A673 (cell line): ENCODE measurements at regions of chr15 and their contacts with region 1.

Region 1: GRCh38 chr15:77738441-77739302 is 106.0 kb upstream of the LINGO1 start:
- DNase-seq: peak; percentile 96
- H3K4me3 ChIP-seq: peak overlapping the region; percentile 3
- H3K27ac ChIP-seq: peak overlapping the region; percentile 99
- H3K4me1 ChIP-seq: peaks cover 90% of the 10 kb centered on the region
- H3K27me3 ChIP-seq: no peaks in the 10 kb centered on the region
- CTCF ChIP-seq: no peak

Region 2: DNA sequence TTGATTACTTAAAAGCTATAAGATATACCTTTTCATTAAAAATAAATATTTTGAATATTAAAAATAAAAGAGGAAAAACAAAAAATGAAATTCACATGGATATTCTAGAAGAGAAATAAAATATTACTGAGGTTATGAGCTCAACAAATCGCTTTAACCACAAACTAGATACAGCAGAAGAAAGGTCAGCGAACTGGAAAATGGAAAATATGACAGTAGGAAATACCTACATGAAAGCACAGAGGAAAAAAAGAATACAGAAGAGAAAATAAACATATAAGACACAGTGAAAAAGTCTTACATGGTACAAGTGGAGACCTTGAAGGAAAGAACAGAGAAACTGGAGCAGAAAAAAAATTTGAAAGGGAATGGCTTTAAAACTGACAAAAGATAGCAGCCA is 866.7 kb before region 1 on chr15:
- CTCF ChIA-PET with region 1: no interaction called
- POLR2A ChIA-PET with region 1: no interaction called
- intact Hi-C with region 1: loop called (anchors 5 kb)
- DNase-seq: no peak
- H3K4me3 ChIP-seq: no peak overlapping the region
- H3K27ac ChIP-seq: peak overlapping the region; percentile 69
- H3K4me1 ChIP-seq: peaks cover 4% of the 10 kb centered on the region
- H3K27me3 ChIP-seq: no peaks in the 10 kb centered on the region
- CTCF ChIP-seq: no peak

Region 3: GRCh38 chr15:77224352-77224751 is 514.3 kb before region 1 on chr15:
- CTCF ChIA-PET with region 1: no interaction called
- POLR2A ChIA-PET with region 1: no interaction called
- intact Hi-C with region 1: loop called (anchors 5 kb)
- DNase-seq: peak; percentile 96
- H3K4me3 ChIP-seq: peak overlapping the region; percentile 8
- H3K27ac ChIP-seq: peak overlapping the region; percentile 54
- H3K4me1 ChIP-seq: peaks cover 54% of the 10 kb centered on the region
- H3K27me3 ChIP-seq: no peaks in the 10 kb centered on the region
- CTCF ChIP-seq: no peak

Region 4: GRCh38 chr15:77633134-77633912 is 105.3 kb before region 1 on chr15:
- CTCF ChIA-PET with region 1: interaction called, 4 read pairs
- POLR2A ChIA-PET with region 1: no interaction called
- intact Hi-C with region 1: loop called (anchors 1 kb)
- DNase-seq: peak; percentile 87
- H3K4me3 ChIP-seq: peak overlapping the region; percentile 68
- H3K27ac ChIP-seq: peak overlapping the region; percentile 82
- H3K4me1 ChIP-seq: peaks cover 34% of the 10 kb centered on the region
- H3K27me3 ChIP-seq: no peaks in the 10 kb centered on the region
- CTCF ChIP-seq: peak; percentile 100

Region 5: DNA sequence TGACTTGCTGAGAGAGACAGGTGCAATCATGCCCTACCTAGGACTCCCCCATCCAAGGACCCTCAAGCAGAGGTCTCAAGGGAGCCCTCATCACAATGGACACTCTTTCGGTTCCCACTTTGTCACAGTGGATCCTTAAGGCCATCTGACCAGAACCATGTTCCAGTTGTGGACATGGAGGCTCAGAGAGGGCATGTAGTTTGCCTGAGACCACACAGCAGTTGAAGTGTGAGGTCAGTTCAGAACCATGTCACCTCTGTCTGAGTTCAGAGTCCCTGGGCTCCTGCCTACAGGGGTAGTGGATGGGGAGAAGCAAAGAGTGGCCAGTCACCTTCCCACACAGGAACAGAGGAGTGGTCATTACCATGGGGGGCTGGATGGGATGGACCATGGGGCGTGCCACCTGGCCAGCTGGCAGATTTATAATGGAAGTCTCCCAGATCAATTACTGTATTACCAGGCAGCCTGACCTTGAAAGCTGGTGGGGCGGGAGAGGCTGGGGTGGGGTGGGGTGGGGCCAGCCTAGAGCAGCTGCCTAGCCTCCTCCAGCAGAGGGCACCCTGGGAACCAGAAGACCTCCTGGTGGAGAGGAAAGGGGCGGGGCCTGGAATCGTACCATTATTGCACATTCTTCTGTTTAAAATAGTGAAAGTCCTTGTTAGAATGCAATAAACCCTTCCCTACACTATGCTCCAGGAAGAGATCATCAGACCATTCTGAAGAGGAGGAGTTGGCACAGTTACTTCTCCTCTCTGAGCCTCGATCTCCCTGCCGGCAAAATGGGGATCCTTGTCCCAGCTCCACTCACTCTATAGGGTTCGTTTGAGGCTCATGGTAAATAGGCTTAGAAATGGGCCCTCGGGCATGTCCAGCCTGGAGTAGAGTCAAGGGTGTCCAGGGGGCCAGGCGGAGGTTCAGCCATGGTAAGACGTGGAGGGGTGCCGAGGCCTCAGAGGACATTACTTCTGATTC is 79.0 kb before region 1 on chr15:
- CTCF ChIA-PET with region 1: no interaction called
- POLR2A ChIA-PET with region 1: no interaction called
- intact Hi-C with region 1: loop called (anchors 5 kb)
- DNase-seq: peak; percentile 92
- H3K4me3 ChIP-seq: no peak overlapping the region
- H3K27ac ChIP-seq: peak overlapping the region; percentile 70
- H3K4me1 ChIP-seq: peaks cover 44% of the 10 kb centered on the region
- H3K27me3 ChIP-seq: no peaks in the 10 kb centered on the region
- CTCF ChIP-seq: peak; percentile 68

Region 6: DNA sequence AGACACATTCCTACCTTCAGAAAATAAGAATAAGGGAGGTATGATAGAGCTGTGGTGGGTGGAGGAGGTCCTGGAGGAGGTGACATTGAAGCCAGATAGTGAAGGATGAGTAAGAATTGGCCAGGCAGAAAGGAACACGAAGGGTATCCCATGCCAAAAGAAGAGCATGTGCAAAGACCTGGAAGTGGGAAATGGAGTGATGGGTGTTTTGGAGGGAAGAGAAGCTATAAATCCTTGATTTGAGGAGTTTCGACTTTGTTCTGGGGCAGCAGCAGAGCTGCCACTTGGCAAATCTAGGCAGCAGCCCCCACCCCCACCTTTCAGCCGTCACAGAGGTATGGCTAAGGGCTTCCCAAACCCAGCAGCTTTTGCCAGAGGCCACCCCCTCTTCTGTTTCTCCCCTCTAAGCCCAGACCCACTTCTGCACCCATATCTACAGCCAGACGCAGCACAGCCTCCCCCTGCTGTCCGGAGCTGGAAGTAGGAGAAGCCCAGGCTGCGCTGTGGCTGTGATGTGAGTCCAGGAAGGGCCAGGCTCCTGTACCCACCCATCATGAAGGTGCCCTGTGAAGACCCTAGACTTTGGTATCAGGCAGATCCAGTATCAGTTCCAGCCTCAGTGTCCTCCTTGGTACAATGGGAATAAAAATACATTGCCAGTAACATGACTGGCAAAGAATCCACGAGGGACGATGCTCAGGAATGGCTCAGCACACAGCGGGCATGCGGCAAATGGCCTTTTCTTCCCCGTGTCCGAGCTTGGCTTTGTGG is 82.7 kb after region 1 on chr15:
- CTCF ChIA-PET with region 1: interaction called, 5 read pairs
- POLR2A ChIA-PET with region 1: no interaction called
- intact Hi-C with region 1: loop called (anchors 2 kb)
- DNase-seq: peak; percentile 89
- H3K4me3 ChIP-seq: peak overlapping the region; percentile 93
- H3K27ac ChIP-seq: peak overlapping the region; percentile 91
- H3K4me1 ChIP-seq: peaks cover 36% of the 10 kb centered on the region
- H3K27me3 ChIP-seq: no peaks in the 10 kb centered on the region
- CTCF ChIP-seq: peak; percentile 98

Region 7: DNA sequence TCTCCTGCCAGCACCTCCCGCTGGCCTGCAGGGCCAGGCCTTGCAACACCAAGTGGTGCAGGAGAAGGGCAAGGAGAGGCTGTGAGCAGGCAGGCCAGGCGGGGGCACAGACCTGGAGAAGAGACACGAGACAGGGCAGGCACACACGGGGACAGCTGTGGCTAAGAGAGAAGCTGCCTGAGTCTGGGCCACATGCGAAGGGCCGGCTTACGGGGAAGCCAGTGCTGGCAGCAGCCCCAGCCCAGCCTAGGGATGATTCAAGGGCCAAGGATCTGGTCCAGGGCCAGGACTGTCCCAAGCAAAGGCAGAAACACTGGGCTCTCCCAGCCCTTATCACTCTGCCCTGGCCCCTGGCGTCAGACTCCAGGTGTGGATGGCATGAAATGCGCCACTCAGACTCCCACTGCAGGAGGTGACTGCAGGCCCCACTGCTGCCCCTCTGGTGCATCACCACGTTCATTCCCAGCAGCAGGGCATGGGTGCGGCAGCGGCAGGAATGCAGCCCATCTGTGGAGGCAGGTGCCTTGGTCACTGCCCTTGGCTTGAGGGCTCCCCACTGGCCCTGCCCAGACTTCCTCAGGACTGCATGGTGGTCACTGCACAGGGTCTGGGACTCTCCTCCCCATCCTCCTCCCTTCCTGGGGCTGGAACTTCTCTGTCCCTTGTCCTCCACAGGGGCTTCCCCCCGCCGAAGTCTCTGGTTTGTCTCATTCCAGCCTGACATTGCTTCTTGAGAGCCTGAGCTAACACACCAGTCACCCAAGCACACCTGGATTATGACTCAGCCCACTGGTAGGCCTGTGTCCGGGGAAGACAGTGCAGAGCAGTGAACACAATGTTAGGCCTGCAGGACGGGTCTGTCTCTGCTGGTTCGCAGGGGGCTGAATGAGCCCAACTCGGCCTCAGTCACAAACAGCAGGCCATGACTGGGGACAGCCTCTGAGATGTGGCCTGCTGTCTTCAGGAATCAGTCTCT is 269.5 kb after region 1 on chr15:
- CTCF ChIA-PET with region 1: no interaction called
- POLR2A ChIA-PET with region 1: no interaction called
- intact Hi-C with region 1: no loop called
- DNase-seq: no peak
- H3K4me3 ChIP-seq: no peak overlapping the region
- H3K27ac ChIP-seq: no peak overlapping the region
- H3K4me1 ChIP-seq: no peaks in the 10 kb centered on the region
- H3K27me3 ChIP-seq: no peaks in the 10 kb centered on the region
- CTCF ChIP-seq: no peak

Region 8: GRCh38 chr15:78120523-78120922 is 381.9 kb after region 1 on chr15:
- CTCF ChIA-PET with region 1: no interaction called
- POLR2A ChIA-PET with region 1: no interaction called
- intact Hi-C with region 1: no loop called
- DNase-seq: no peak
- H3K4me3 ChIP-seq: no peak overlapping the region
- H3K27ac ChIP-seq: no peak overlapping the region
- H3K4me1 ChIP-seq: no peaks in the 10 kb centered on the region
- H3K27me3 ChIP-seq: no peaks in the 10 kb centered on the region
- CTCF ChIP-seq: no peak